ENCODE measurements at regions of chr6 and their contacts with region 1.

Region 1: GRCh38 chr6:43013843-43014433 is at the starts of genes KLHDC3 and MEA1:
- DNase-seq: peak; percentile 99 to 100 (median 100)
- H3K4me3 ChIP-seq: peak within 1 kb of the TSS; percentile 58 to 90 (median 81)
- H3K27ac ChIP-seq: peak within 1 kb of the TSS in 58 of 59 donors; percentile 28 to 93 (median 83)
- H3K27me3 ChIP-seq: no peaks in the 10 kb centered on the region
- CTCF ChIP-seq: peak in 13 of 56 donors; percentile 4 to 35 (median 22)
- total RNA-seq, gene KLHDC3: 89.7 to 318 (median 224) TPM
- total RNA-seq, gene MEA1: 35.0 to 82.2 (median 58.5) TPM

Region 2: GRCh38 chr6:42928986-42929820 is 84.7 kb before region 1 on chr6 and contains the start of gene CNPY3:
- intact Hi-C with region 1: loop called in 1 of 2 experiments (anchors 1 kb)
- DNase-seq: peak; percentile 79 to 96 (median 94)
- H3K4me3 ChIP-seq: peak within 1 kb of the TSS; percentile 65 to 98 (median 85)
- H3K27ac ChIP-seq: peak within 1 kb of the TSS; percentile 61 to 98 (median 93)
- H3K27me3 ChIP-seq: no peaks in the 10 kb centered on the region
- CTCF ChIP-seq: peak in 19 of 56 donors; percentile 6 to 52 (median 21)
- total RNA-seq, gene CNPY3: 33.3 to 56.8 (median 43.9) TPM

Region 3: DNA sequence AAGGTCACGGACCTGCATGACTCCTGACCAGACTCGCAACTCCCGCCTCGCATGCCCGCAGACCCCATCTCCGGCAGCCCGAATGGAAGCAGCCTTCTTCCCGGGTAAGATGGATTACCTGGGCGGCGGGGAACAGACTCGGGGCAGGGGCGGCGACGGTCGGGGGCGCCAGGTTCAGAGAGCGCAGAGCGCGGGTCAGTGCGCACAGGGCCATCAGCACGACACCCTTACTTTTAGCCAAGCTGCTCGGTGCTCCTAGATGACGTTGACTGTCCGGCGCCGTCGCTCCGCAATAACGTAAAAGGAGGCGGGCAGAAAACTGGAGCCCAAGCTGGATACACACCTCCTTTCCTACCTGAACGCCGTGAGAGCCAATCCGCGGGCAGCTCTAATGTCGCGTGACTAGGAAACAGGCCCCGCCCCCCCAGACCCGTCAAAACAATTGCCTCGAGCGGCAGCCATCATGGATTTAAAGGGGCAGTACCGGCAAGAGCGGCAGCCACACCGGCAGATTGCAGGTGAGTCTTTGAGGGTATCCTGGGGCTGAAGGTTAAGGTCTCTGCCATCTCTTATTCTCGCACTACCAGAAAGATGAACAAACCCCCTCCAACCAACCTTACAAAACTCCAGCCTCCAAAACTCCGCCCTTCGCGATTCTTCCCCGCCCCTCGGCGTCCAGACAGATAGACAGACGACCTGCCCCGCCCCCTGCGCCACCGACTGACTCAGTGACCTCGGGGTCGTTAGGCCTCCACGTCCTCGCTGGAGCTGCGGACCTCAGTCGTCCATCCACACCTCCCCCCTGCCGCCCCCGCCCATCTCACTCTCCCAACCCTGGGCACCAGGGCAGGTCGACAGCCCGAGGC is 45.5 kb after region 1 on chr6 and contains the starts of genes KLC4 and MRPL2:
- intact Hi-C with region 1: loop called (anchors 1 to 2 kb)
- DNase-seq: peak; percentile 98 to 100 (median 100)
- H3K4me3 ChIP-seq: peak within 1 kb of the TSS; percentile 61 to 100 (median 92)
- H3K27ac ChIP-seq: peak within 1 kb of the TSS in 58 of 59 donors; percentile 31 to 96 (median 87)
- H3K27me3 ChIP-seq: no peaks in the 10 kb centered on the region
- CTCF ChIP-seq: peak in 8 of 56 donors; percentile 5 to 34 (median 16)
- total RNA-seq, gene KLC4: 39.5 to 88.4 (median 59.1) TPM
- total RNA-seq, gene MRPL2: 30.1 to 96.7 (median 58.0) TPM

Region 4: GRCh38 chr6:43174263-43175112 is 160.6 kb after region 1 on chr6:
- intact Hi-C with region 1: loop called (anchors 5 to 10 kb)
- DNase-seq: peak; percentile 88 to 99 (median 98)
- H3K4me3 ChIP-seq: peak overlapping the region; percentile 29 to 98 (median 81)
- H3K27ac ChIP-seq: peak overlapping the region; percentile 50 to 98 (median 90)
- H3K27me3 ChIP-seq: no peaks in the 10 kb centered on the region
- CTCF ChIP-seq: peak in 50 of 56 donors; percentile 8 to 67 (median 42)

Measured in dorsolateral prefrontal cortex (tissue), 120 donors.